Upper lobe of right lung (tissue), 1 donor: ENCODE measurements at regions of chr1 and their contacts with region 1.

Region 1: DNA sequence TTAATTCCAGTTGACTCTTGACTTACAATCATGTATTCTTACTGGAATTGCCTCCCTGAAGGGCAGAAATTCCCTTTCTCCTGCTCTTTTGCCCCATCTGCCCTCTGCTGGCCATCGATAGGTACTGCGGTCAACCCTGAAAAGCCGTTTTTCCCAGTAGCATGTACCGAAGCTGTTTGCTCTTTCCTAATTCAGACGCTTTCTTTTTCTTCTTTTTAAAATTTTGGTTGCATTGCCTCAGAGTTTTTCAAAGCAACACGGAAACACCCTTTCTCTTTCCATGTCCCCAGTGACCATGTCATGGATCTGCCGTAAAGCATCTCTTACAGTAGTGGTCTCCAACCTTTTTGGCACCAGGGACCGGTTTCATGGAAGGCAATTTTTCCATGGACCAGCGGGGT is 164.2 kb upstream of the C1orf21 start:
- DNase-seq: no peak
- ATAC-seq: peak; percentile 92
- H3K4me3 ChIP-seq: peak overlapping the region; percentile 17
- H3K27ac ChIP-seq: no peak overlapping the region
- H3K4me1 ChIP-seq: no peaks in the 10 kb centered on the region
- H3K27me3 ChIP-seq: no peaks in the 10 kb centered on the region
- CTCF ChIP-seq: peak; percentile 95

Region 2: DNA sequence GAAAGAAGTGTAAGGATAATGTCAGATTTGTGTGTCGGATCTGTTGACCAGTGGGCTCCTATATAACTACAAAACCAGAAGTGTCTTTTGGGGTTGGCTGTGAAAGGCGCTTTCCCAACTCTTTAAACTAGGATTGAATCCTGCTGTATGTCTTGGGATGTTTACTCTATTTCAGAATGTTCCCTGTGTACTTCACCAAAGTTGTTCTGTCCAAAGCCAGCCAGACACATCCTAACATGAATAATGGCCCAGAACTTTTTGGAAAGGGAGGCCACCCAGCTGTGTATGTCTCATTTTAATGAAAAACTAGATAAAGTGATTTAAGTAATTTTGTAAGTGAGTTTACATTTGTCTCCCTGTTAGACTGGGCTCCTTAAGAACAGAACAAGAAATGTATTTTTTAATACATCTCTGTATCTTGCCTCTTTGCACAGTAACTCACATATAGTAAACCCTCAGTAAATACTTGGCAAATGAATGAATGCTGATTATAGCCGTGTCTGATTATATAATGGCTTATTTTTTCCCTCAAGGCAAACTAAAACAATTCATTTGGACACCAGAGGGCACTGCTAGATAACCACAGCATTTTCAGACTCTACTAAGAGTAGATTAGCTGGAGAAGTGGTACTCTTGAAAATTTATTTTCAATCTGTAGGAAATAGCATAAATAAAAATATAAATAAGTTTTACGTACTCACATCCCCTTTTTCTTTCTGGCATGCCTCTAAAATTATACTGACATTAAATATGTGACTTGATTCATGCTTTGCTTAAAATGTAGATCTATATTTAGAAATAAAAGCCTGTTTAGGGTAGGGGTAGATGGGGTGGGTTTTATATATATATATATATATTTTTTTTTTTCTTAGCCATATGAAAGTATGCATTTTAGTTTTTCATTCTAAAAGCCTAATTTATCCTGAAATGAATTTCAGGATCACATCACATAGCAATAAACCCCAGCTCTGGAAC is 147.3 kb before region 1 on chr1:
- intact Hi-C with region 1: loop called (anchors 5 kb)
- DNase-seq: no peak
- ATAC-seq: peak; percentile 80
- H3K4me3 ChIP-seq: no peak overlapping the region
- H3K27ac ChIP-seq: no peak overlapping the region
- H3K4me1 ChIP-seq: no peaks in the 10 kb centered on the region
- H3K27me3 ChIP-seq: no peaks in the 10 kb centered on the region
- CTCF ChIP-seq: peak; percentile 74